ENCODE measurements at regions of chr4 and their contacts with region 1.

Region 1: GRCh38 chr4:76305971-76306881 is at the start of gene STBD1:
- DNase-seq: peak; percentile 91
- total RNA-seq, gene STBD1: 17.6 to 37.4 TPM

Region 2: GRCh38 chr4:76198411-76199237 is 107.6 kb before region 1 on chr4:
- intact Hi-C with region 1: loop called (anchors 10 kb)
- DNase-seq: peak; percentile 83

Region 3: GRCh38 chr4:76410636-76411035 is 104.4 kb after region 1 on chr4:
- intact Hi-C with region 1: loop called in 1 of 2 experiments (anchors 10 kb)
- DNase-seq: no peak

Measured in posterior vena cava (tissue), 2 donors.